Esophagus muscularis mucosa (tissue), 4 donors: ENCODE measurements at regions of chr13 and their contacts with region 1.

Region 1: DNA sequence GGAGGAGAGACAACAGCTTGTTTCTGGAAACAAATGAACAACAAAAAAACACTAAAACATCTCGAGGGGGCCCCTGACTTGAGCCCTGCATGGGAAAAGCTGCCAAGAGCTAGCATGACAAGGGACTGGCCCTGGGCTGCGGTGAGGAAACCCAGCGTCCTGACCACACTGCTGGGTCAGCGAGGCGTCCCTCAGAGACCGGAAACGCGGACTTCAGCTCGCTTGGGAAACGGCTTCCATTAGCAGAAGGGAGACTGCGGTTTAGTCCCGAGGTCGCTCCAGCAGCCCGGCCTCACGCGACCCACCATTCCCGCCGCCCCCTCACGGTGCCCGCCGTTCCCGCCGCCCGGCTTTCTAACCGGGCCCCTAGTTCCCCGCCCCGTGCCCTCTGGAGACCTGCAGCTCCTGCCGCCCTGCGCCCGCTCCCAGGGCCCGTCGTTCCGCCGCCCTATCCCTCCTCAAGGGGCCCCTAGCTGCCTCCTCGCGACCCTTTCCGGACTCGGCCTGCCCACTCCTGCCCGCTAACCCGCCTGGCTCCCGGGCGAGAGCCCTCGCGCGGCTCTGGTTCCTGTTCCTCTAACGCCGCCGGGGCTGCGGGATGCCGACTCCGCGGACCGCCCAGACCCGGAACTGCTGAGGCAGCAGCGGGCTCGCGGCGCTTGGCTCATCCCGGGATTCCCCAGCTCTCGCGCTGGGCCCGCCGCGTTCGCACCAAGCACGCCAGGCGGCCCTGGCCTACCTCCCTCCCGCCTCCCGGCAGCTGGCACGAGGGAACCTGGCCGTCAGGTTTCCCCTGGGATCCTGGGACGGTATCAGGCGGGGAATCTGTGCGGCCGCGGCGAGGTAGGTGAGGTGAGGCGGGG is at the start of gene CCDC122:
- DNase-seq: peak; percentile 92
- H3K4me3 ChIP-seq: peak within 1 kb of the TSS; percentile 77 to 93 (median 86)
- H3K27ac ChIP-seq: peak within 1 kb of the TSS; percentile 95 to 99 (median 97)
- H3K4me1 ChIP-seq: peaks cover 12 to 25% (median 22%) of the 10 kb centered on the region in 4 donors
- H3K27me3 ChIP-seq: no peaks in the 10 kb centered on the region
- CTCF ChIP-seq: peak in 1 of 3 experiments; percentile 6
- EP300 ChIP-seq: no peak
- POLR2A ChIP-seq: no peak
- total RNA-seq, gene CCDC122: 2.1 to 13.2 (median 3.2) TPM

Region 2: GRCh38 chr13:42594970-42595571 is 1284.1 kb before region 1 on chr13:
- intact Hi-C with region 1: loop called (anchors 5 kb)
- DNase-seq: no peak
- H3K4me3 ChIP-seq: no peak overlapping the region
- H3K27ac ChIP-seq: no peak overlapping the region
- H3K4me1 ChIP-seq: peaks cover 0 to 4% (median 0%) of the 10 kb centered on the region in 4 donors
- H3K27me3 ChIP-seq: peaks cover 0 to 2% (median 0%) of the 10 kb centered on the region in 4 donors
- CTCF ChIP-seq: peak; percentile 69 to 85 (median 82)
- EP300 ChIP-seq: no peak
- POLR2A ChIP-seq: no peak

Region 3: DNA sequence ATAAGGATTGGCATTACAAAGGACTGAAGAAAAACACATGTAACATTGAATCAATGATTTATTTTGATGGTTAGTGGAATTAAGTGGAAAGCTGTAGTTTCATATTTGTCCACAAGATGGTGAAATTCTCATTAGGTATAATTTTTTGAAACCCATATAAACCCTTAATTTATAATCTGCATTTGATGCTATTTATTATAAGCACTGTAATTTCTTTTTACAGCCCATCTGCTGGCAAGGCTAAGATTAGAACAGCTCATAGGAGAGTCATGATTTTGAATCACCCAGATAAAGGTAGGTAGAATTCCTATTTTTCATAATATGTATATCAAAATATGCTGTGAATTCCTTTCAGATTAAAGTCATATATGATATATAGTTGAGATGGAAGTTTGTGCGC is 793.6 kb before region 1 on chr13:
- intact Hi-C with region 1: loop called (anchors 5 kb)
- DNase-seq: no peak
- H3K4me3 ChIP-seq: no peak overlapping the region
- H3K27ac ChIP-seq: no peak overlapping the region
- H3K4me1 ChIP-seq: peaks cover 0 to 11% (median 1%) of the 10 kb centered on the region in 4 donors
- H3K27me3 ChIP-seq: no peaks in the 10 kb centered on the region
- CTCF ChIP-seq: peak; percentile 60 to 84 (median 75)
- EP300 ChIP-seq: no peak
- POLR2A ChIP-seq: no peak